ENCODE measurements at regions of chrX and their contacts with region 1.

Region 1: GRCh38 chrX:111041018-111041462 is 55.0 kb upstream of the PAK3 start:
- DNase-seq: peak; percentile 89
- H3K4me3 ChIP-seq: no peak overlapping the region
- H3K27ac ChIP-seq: peak overlapping the region; percentile 95
- H3K4me1 ChIP-seq: peaks cover 32% of the 10 kb centered on the region
- H3K27me3 ChIP-seq: no peaks in the 10 kb centered on the region
- CTCF ChIP-seq: no peak

Region 2: DNA sequence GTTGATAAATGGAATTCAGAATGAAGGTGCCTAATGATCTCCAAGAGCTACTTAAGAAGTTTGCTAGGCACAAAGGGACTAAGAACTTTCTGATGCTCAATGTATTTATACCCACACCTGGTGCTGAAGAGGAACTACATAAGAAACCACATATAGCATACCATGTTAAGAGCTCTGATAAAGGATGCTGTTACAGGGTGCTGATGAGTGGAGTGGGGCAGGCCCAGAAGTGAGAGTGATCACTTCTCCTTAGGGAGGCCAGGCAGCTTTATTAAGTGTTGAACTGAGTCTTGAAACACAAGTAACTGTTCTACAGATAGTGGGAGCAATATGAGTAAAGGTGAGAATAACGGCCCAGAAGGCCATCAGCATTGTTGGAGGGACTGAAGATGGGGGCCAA is 177.2 kb before region 1 on chrX:
- CTCF ChIA-PET with region 1: no interaction called
- dilution Hi-C with region 1: no loop called
- in situ Hi-C with region 1: no loop called
- intact Hi-C with region 1: no loop called
- DNase-seq: no peak
- H3K4me3 ChIP-seq: no peak overlapping the region
- H3K27ac ChIP-seq: no peak overlapping the region
- H3K4me1 ChIP-seq: no peaks in the 10 kb centered on the region
- H3K27me3 ChIP-seq: no peaks in the 10 kb centered on the region
- CTCF ChIP-seq: no peak

Region 3: GRCh38 chrX:110944751-110945675 is 96.0 kb before region 1 on chrX:
- CTCF ChIA-PET with region 1: no interaction called
- dilution Hi-C with region 1: loop called (anchors 5 kb)
- in situ Hi-C with region 1: no loop called
- intact Hi-C with region 1: no loop called
- DNase-seq: peak; percentile 69
- H3K4me3 ChIP-seq: peak overlapping the region; percentile 25 to 57 (median 50)
- H3K27ac ChIP-seq: no peak overlapping the region
- H3K4me1 ChIP-seq: peaks cover 13% of the 10 kb centered on the region
- H3K27me3 ChIP-seq: no peaks in the 10 kb centered on the region
- CTCF ChIP-seq: no peak

Measured in mammary epithelial cell (primary cell).